ENCODE measurements at regions of chr18 and their contacts with region 1.

Region 1: GRCh38 chr18:58993260-58993659 is 128.6 kb downstream of the ZNF532 start:
- DNase-seq: no peak
- ATAC-seq: no peak

Region 2: DNA sequence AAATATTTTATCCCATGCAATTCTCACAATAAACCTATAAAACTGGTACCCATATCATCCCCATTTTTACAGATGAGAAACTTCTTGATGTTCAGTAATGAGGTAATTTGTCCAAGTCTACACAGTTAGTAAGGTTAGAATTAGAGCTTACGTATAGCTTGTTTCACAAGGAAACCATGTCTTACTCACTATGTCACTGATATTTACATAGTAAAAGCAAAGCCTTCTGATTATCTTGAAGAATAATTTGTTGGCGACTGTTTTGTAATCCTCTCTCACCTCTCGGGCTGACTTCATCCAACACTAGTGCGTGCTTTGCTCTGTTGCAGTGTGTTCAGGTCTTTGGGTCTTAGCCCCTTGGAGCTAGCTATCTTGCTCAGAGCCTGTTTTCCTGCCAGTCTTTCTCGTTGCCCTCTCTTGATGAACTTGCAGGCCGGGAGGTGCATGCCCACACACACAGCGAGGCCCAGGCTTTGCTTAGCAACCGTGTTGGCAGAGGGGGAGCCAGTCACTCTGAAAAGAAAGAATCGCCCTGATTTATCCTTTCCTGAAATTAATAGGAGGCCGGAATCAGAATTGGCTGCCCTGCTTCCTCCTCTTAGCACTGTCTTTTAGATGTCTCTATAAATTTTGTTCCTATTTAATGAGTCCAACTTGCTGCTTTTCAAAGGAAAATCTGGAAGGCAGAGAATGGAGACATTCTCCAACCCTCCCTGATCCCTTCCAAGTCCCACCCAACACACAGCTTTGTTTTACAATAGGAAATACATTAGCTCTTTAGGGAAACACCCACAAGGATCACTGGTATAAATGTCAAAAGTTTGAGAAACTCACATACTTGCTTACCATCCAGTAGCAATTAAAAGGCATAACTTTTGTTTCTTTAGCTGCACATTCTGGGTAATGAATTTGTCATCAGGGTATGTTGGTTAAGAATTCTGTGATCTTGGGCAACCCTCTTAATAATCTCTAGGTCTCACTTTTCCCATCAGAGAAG is 48.9 kb after region 1 on chr18:
- intact Hi-C with region 1: loop called (anchors 2 kb)
- DNase-seq: no peak
- ATAC-seq: no peak

Measured in Right ventricle myocardium inferior (tissue), 1 donor.